ENCODE measurements at regions of chr17 and their contacts with region 1.

Region 1: DNA sequence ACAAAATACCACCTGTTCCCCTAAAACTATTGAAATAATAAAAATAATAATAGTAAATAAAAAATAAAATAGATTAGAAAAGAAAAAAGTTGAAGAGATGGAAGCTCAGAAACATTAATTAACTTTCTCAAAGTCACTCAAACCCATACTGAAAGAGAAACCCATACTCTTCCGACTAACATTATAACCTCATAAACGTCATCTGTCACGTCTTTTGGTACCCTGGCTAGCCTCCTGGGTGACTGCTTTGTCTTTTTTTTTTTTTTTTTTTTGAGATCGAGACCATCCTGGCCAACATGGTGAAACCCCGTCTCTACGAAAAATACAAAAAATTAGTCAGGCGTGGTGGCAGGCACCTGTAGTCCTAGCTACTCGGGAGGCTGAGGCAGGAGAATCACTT is 7.6 kb downstream of the SLFN12L start:
- DNase-seq: no peak
- H3K4me3 ChIP-seq: no peak overlapping the region
- H3K27ac ChIP-seq: no peak overlapping the region
- H3K4me1 ChIP-seq: no peaks in the 10 kb centered on the region
- H3K27me3 ChIP-seq: peaks cover 6% of the 10 kb centered on the region
- CTCF ChIP-seq: no peak
- EP300 ChIP-seq: no peak
- POLR2A ChIP-seq: no peak

Region 2: GRCh38 chr17:34285286-34285792 is 1244.5 kb before region 1 on chr17 and contains the start of gene CCL11:
- in situ Hi-C with region 1: no loop called
- intact Hi-C with region 1: loop called (anchors 5 kb)
- DNase-seq: no peak
- H3K4me3 ChIP-seq: no peak within 1 kb of the TSS
- H3K27ac ChIP-seq: peak within 1 kb of the TSS in 2 of 4 donors; percentile 17 to 34
- H3K4me1 ChIP-seq: no peaks in the 10 kb centered on the region
- H3K27me3 ChIP-seq: no peaks in the 10 kb centered on the region
- CTCF ChIP-seq: no peak
- EP300 ChIP-seq: no peak
- POLR2A ChIP-seq: no peak
- total RNA-seq, gene CCL11: 3.0 to 10.5 (median 5.8) TPM

Region 3: DNA sequence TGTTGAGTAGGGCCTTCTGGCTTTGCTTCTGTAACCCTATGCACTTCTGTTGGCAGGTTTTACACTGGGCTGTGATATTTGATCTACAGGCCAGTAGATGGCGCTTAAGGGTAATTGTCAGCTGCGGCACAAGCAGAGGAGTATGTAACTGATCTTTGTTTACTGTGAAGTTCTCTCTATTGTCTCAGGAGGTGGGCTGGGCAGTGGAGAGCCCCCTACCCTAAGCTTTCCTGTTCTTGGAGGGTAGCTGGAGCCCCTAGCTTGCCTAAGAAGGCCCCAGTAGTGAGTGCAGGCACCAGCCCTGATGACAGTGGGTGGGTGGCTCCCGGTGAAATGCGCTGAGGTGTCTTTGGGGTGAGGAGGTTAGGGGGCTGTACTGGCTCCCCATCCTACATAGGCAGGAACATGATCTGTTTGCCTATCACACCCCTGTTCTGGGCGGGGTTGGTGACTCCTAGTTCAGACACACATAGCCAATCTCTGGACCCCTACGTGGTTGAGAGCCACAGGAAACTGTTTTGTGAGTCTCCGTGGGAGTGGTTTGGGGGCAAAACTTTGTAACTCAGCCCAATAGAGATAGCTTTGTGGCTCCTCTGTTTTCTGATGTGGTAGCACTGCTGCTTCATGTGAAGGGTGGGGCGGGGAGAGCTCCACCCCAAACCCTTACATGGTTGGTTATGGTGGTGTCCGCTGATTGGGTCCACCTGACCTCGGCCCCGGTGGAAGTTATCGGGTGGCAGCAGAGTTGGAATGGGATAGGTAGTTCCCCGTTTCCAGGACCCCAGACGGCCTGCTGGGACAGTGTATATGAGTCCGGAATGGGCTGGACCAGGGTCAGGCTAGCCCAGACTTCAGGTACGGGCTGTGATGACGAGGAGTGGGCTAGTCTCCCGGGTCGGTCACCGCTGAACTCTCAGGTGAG is 216.8 kb before region 1 on chr17:
- in situ Hi-C with region 1: loop called (anchors 5 to 25 kb)
- intact Hi-C with region 1: loop called (anchors 2 kb)
- DNase-seq: peak; percentile 51
- H3K4me3 ChIP-seq: peak overlapping the region in 3 of 4 donors; percentile 6 to 29 (median 14)
- H3K27ac ChIP-seq: peak overlapping the region; percentile 36 to 65 (median 49)
- H3K4me1 ChIP-seq: peaks cover 0 to 11% (median 0%) of the 10 kb centered on the region in 4 donors
- H3K27me3 ChIP-seq: no peaks in the 10 kb centered on the region
- CTCF ChIP-seq: peak; percentile 74 to 79 (median 75)
- EP300 ChIP-seq: no peak
- POLR2A ChIP-seq: peak; percentile 18